Transverse colon (tissue), 4 donors: ENCODE measurements at regions of chr17 and their contacts with region 1.

Region 1: GRCh38 chr17:37107406-37108083 is 158.8 kb downstream of the AATF start:
- DNase-seq: no peak
- H3K4me3 ChIP-seq: no peak overlapping the region
- H3K27ac ChIP-seq: no peak overlapping the region
- H3K4me1 ChIP-seq: no peaks in the 10 kb centered on the region
- H3K27me3 ChIP-seq: no peaks in the 10 kb centered on the region
- CTCF ChIP-seq: no peak
- EP300 ChIP-seq: no peak
- POLR2A ChIP-seq: no peak

Region 2: DNA sequence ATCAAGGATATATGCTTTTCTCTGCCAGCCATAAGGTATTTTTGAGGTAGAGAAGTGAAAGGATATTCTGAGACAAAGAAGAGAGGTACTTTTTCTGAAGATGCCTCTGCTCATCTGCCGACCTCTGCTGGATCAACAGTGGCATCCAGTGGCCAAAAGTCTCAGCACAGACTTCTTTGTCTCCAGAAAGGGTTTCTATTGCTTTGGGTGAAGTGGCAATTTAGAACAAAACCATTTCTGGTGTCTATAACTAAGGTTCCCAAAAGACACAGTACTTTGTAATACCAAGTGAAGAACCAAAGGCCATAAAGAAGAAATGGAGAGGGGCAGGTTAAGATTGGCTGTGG is 113.0 kb after region 1 on chr17:
- in situ Hi-C with region 1: loop called in 1 of 4 experiments (anchors 25 kb)
- intact Hi-C with region 1: no loop called
- DNase-seq: peak; percentile 9
- H3K4me3 ChIP-seq: no peak overlapping the region
- H3K27ac ChIP-seq: no peak overlapping the region
- H3K4me1 ChIP-seq: no peaks in the 10 kb centered on the region
- H3K27me3 ChIP-seq: no peaks in the 10 kb centered on the region
- CTCF ChIP-seq: no peak
- EP300 ChIP-seq: no peak
- POLR2A ChIP-seq: no peak